ENCODE measurements at regions of chr7 and their contacts with region 1.

Region 1: GRCh38 chr7:873367-874002 is 2.9 kb upstream of the GET4 start:
- DNase-seq: peak; percentile 84
- ATAC-seq: peak; percentile 47; the same call in 1 of the 2 replicates
- H3K4me3 ChIP-seq: no peak overlapping the region
- H3K27ac ChIP-seq: peak overlapping the region; percentile 81
- H3K4me1 ChIP-seq: peaks cover 16% of the 10 kb centered on the region
- H3K27me3 ChIP-seq: no peaks in the 10 kb centered on the region
- CTCF ChIP-seq: peak; percentile 99

Region 2: GRCh38 chr7:786472-787255 is 86.8 kb before region 1 on chr7:
- CTCF ChIA-PET with region 1: no interaction called
- POLR2A ChIA-PET with region 1: no interaction called
- in situ Hi-C with region 1: no loop called
- intact Hi-C with region 1: loop called (anchors 5 kb)
- DNase-seq: peak; percentile 39
- ATAC-seq: peak; percentile 73
- H3K4me3 ChIP-seq: no peak overlapping the region
- H3K27ac ChIP-seq: no peak overlapping the region
- H3K4me1 ChIP-seq: no peaks in the 10 kb centered on the region
- H3K27me3 ChIP-seq: no peaks in the 10 kb centered on the region
- CTCF ChIP-seq: peak; percentile 95

Region 3: DNA sequence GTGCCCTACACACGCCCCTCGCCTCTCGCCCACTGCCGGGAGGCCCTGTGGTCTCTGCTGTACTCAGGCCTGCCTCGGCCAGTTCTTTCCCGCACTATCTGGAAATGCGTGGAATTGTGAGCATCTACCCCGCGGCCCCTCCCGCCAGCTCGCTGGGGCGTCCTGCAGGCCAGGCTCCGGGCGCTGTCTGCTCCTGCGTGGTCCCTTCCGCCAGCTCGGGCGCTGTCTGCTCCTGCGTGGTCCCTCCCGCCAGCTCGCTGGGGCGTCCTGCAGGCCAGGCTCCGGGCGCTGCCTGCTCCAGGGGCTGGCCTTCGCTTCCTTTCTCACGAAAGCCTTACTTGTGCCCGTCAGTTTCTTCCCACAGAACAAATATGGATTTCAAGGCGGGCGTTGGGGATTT is 17.8 kb after region 1 on chr7:
- CTCF ChIA-PET with region 1: no interaction called
- POLR2A ChIA-PET with region 1: no interaction called
- in situ Hi-C with region 1: no loop called
- intact Hi-C with region 1: no loop called
- DNase-seq: no peak
- ATAC-seq: no peak
- H3K4me3 ChIP-seq: no peak overlapping the region
- H3K27ac ChIP-seq: no peak overlapping the region
- H3K4me1 ChIP-seq: no peaks in the 10 kb centered on the region
- H3K27me3 ChIP-seq: no peaks in the 10 kb centered on the region
- CTCF ChIP-seq: no peak

Region 4: DNA sequence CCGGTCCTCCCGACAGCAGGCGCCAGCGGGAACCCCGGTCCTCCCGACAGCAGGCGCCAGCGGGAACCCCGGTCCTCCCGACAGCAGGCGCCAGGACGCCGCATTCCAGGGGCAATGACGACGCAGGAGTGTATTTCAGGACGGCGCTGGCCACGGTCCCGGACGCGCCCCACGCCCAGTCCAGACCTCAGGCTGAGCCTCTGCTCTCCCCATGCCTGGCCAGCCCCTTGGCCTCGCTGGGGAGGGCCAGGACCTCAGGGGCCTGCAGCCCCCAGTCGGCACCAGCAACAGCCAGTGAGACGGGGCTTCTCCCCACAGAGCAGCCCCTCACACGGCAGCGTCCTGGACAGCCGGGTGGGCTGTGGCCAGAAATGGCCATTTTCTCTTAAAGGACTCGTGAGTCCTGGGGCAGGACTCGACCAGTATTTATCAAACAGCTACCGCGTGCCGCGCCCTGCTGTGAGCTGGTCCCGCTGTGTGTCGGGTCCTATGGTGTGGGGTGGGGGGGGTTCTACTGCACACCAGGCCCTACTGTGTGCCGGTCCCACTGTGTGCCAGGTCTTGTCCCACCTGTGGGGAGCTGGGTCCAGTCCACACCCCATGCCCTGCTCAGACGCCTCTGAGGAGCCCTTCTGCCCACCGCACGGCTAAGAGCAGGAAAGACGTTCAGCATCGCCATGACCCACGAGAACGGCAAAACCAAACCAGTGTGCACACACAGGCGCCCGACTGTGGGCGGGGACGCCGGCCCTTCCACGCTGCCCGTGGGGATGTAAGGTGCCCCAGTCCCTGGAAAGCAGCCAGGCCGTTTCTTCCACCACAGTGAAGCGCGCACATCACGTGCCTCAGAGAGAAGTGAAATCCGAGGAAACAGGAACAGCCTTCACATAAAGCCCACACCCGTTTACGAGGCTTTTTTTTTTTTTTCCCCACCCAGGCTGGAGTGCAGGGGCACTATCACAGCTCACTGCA is 36.2 kb after region 1 on chr7:
- CTCF ChIA-PET with region 1: no interaction called
- POLR2A ChIA-PET with region 1: no interaction called
- in situ Hi-C with region 1: no loop called
- intact Hi-C with region 1: no loop called
- DNase-seq: no peak
- ATAC-seq: peak; percentile 28; the same call in 1 of the 2 replicates
- H3K4me3 ChIP-seq: peak overlapping the region; percentile 18 to 25; a peak in 3 of 4 replicates
- H3K27ac ChIP-seq: no peak overlapping the region
- H3K4me1 ChIP-seq: peaks cover 12% of the 10 kb centered on the region
- H3K27me3 ChIP-seq: no peaks in the 10 kb centered on the region; the same call in 1 of the 2 replicates
- CTCF ChIP-seq: no peak; the same call in 1 of the 2 replicates

Region 5: GRCh38 chr7:1052031-1052818 is 178.7 kb after region 1 on chr7:
- CTCF ChIA-PET with region 1: interaction called, 10 read pairs
- POLR2A ChIA-PET with region 1: no interaction called
- in situ Hi-C with region 1: no loop called
- intact Hi-C with region 1: no loop called
- DNase-seq: no peak
- ATAC-seq: no peak
- H3K4me3 ChIP-seq: no peak overlapping the region
- H3K27ac ChIP-seq: no peak overlapping the region
- H3K4me1 ChIP-seq: peaks cover 4% of the 10 kb centered on the region
- H3K27me3 ChIP-seq: no peaks in the 10 kb centered on the region
- CTCF ChIP-seq: no peak

Region 6: GRCh38 chr7:1225441-1226185 is 352.1 kb after region 1 on chr7:
- CTCF ChIA-PET with region 1: no interaction called
- POLR2A ChIA-PET with region 1: no interaction called
- in situ Hi-C with region 1: no loop called
- intact Hi-C with region 1: no loop called
- DNase-seq: no peak
- ATAC-seq: peak; percentile 74
- H3K4me3 ChIP-seq: no peak overlapping the region
- H3K27ac ChIP-seq: no peak overlapping the region
- H3K4me1 ChIP-seq: no peaks in the 10 kb centered on the region; the same call in 1 of the 2 replicates
- H3K27me3 ChIP-seq: no peaks in the 10 kb centered on the region
- CTCF ChIP-seq: peak; percentile 100